ENCODE measurements at regions of chr3 and their contacts with region 1.

Region 1: DNA sequence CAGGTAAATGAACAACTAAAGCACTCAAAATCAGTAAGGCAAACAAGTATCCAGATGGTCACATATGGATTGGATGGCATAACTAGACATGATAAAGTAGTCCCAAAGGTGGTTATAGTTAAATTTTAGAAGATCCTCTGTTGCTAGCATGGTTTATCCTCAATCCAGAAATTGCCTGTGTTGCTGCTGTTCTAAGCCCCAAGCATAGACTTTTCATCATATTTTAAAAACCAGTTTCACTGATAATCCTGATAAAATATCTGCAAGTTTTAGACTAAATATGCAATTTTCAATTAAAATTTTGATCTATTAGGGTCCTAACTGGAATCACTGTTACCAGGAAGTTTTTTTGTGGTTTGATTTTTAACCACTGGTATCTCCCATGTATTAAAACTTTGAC is 35.4 kb downstream of the MBNL1 start:
- DNase-seq: no peak
- ATAC-seq: no peak
- H3K4me3 ChIP-seq: no peak overlapping the region
- H3K4me3 Mint-ChIP-seq: no peak overlapping the region
- H3K27ac ChIP-seq: no peak overlapping the region
- H3K27ac Mint-ChIP-seq: peak overlapping the region; percentile 70
- H3K4me1 ChIP-seq: peaks cover 91% of the 10 kb centered on the region
- H3K4me1 Mint-ChIP-seq: peaks cover 88% of the 10 kb centered on the region
- H3K27me3 ChIP-seq: no peaks in the 10 kb centered on the region
- H3K27me3 Mint-ChIP-seq: no peaks in the 10 kb centered on the region
- CTCF ChIP-seq: no peak

Region 2: GRCh38 chr3:152291649-152292066 is 12.5 kb before region 1 on chr3:
- CTCF ChIA-PET with region 1: no interaction called
- POLR2A ChIA-PET with region 1: interaction called, 4 read pairs
- intact Hi-C with region 1: loop called in 1 of 2 experiments (anchors 1 kb)
- DNase-seq: peak in 2 of 9 experiments; percentile 39 to 55
- ATAC-seq: peak; percentile 47
- H3K4me3 ChIP-seq: peak overlapping the region in 1 of 2 experiments; percentile 9
- H3K4me3 Mint-ChIP-seq: peak overlapping the region; percentile 42
- H3K27ac ChIP-seq: peak overlapping the region; percentile 18 to 58
- H3K27ac Mint-ChIP-seq: peak overlapping the region; percentile 71
- H3K4me1 ChIP-seq: peaks cover 80% of the 10 kb centered on the region
- H3K4me1 Mint-ChIP-seq: peaks cover 84% of the 10 kb centered on the region
- H3K27me3 ChIP-seq: no peaks in the 10 kb centered on the region
- H3K27me3 Mint-ChIP-seq: no peaks in the 10 kb centered on the region
- CTCF ChIP-seq: no peak